Right cardiac atrium (tissue), 5 donors: ENCODE measurements at regions of chr17 and their contacts with region 1.

Region 1: DNA sequence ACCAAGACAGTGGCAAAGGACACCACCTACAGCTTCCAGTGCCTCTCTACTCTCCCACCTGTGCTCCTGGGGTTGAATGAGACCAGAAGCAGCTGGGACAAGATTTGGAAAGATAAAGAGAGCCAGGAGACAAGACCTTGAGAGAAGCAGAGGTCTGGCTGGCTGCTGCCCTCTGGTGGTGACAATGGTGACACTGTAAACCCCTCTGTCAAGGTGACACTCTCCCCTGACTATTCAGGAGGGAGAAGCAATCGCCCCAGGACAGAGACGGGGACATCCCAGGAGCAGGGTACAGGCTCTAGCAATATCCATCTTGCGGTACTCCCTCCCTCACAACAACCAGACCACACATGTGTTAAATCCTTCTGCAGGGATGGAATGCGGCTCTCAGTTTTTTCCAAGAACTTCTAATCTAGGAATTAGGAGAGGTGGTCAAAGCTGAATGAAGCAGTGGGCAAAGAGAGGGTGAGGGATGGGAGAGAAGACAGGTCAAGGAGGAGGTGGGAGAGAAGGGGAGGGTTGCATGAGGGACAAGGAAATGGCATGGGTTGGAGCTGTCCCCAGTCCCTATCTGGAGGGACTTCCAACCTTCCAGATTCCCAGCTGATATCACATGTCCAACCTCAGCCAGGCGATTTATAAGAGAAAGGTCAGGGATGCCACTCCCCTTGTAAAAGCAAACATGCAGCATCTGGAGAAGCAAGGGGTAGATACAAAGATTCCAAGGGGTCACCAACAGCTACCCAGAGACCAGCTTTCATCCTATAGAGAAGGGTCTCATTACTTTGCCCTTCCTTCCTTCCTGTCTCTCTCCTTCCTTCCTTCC is 2.9 kb downstream of the PHOSPHO1 start:
- DNase-seq: peak; percentile 75 to 86 (median 86)
- ATAC-seq: peak; percentile 30 to 33
- H3K4me3 ChIP-seq: no peak overlapping the region
- H3K27ac ChIP-seq: no peak overlapping the region
- H3K4me1 ChIP-seq: no peaks in the 10 kb centered on the region
- H3K27me3 ChIP-seq: no peaks in the 10 kb centered on the region

Region 2: GRCh38 chr17:48593840-48594537 is 633.7 kb before region 1 on chr17:
- intact Hi-C with region 1: no loop called
- DNase-seq: peak; percentile 69 to 91 (median 90)
- ATAC-seq: peak; percentile 56 to 68
- H3K4me3 ChIP-seq: peak overlapping the region; percentile 6
- H3K27ac ChIP-seq: no peak overlapping the region
- H3K4me1 ChIP-seq: peaks cover 4% of the 10 kb centered on the region
- H3K27me3 ChIP-seq: no peaks in the 10 kb centered on the region

Region 3: DNA sequence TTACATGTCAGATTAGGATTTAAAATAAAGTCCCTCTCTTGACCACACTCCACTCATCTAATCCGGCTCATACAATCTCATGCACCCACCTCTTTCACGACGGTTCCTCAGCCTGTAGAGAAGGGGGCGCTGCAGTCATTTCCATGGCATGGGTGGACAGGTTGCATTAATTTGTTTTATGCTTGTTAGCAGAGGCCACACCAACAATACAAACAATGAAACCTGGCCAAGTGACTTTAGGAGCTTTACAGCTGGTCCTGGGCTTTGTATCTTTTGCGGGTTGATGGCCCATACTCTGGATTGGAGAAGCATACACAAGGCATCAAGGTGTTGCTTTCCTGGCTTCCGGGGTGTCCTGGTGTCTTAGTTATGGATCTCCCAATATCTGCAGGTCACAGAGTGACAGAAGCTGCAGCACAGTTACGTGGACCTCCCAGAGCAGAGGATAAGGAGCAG is 273.3 kb before region 1 on chr17:
- intact Hi-C with region 1: no loop called
- DNase-seq: no peak
- ATAC-seq: no peak
- H3K4me3 ChIP-seq: no peak overlapping the region
- H3K27ac ChIP-seq: no peak overlapping the region
- H3K4me1 ChIP-seq: no peaks in the 10 kb centered on the region
- H3K27me3 ChIP-seq: no peaks in the 10 kb centered on the region

Region 4: DNA sequence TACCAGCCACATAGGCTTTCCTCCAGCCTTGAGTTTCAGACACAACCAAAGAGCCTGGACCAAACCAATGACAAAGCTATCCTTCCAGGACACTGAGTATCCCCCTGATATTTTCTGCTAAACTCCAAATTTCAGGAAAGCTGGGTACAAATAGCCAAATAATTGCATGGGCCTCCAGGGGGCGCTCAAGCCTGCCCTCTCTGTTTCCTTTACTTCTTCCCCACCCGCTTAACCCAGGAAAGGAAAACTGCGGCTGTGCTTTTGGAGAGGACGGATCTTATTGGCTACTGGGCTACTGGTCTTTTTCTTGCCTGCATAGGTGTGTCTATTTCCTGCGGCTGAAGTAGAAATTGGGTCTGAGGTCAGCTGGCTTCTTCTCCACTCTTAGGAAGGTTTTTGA is 47.3 kb before region 1 on chr17:
- intact Hi-C with region 1: loop called in 1 of 4 experiments (anchors 5 kb)
- DNase-seq: peak; percentile 63 to 83 (median 73)
- ATAC-seq: peak; percentile 52 to 78
- H3K4me3 ChIP-seq: no peak overlapping the region
- H3K27ac ChIP-seq: no peak overlapping the region
- H3K4me1 ChIP-seq: no peaks in the 10 kb centered on the region
- H3K27me3 ChIP-seq: no peaks in the 10 kb centered on the region

Region 5: GRCh38 chr17:49191917-49192741 is 35.5 kb before region 1 on chr17:
- intact Hi-C with region 1: loop called in 1 of 4 experiments (anchors 5 kb)
- DNase-seq: peak; percentile 88 to 96 (median 95)
- ATAC-seq: peak; percentile 90 to 94
- H3K4me3 ChIP-seq: peak overlapping the region; percentile 63
- H3K27ac ChIP-seq: peak overlapping the region; percentile 95
- H3K4me1 ChIP-seq: no peaks in the 10 kb centered on the region
- H3K27me3 ChIP-seq: no peaks in the 10 kb centered on the region

Region 6: GRCh38 chr17:49305926-49306325 is 78.3 kb after region 1 on chr17:
- intact Hi-C with region 1: no loop called
- DNase-seq: no peak
- ATAC-seq: no peak
- H3K4me3 ChIP-seq: no peak overlapping the region
- H3K27ac ChIP-seq: no peak overlapping the region
- H3K4me1 ChIP-seq: no peaks in the 10 kb centered on the region
- H3K27me3 ChIP-seq: no peaks in the 10 kb centered on the region